ENCODE measurements at regions of chr10 and their contacts with region 1.

Region 1: DNA sequence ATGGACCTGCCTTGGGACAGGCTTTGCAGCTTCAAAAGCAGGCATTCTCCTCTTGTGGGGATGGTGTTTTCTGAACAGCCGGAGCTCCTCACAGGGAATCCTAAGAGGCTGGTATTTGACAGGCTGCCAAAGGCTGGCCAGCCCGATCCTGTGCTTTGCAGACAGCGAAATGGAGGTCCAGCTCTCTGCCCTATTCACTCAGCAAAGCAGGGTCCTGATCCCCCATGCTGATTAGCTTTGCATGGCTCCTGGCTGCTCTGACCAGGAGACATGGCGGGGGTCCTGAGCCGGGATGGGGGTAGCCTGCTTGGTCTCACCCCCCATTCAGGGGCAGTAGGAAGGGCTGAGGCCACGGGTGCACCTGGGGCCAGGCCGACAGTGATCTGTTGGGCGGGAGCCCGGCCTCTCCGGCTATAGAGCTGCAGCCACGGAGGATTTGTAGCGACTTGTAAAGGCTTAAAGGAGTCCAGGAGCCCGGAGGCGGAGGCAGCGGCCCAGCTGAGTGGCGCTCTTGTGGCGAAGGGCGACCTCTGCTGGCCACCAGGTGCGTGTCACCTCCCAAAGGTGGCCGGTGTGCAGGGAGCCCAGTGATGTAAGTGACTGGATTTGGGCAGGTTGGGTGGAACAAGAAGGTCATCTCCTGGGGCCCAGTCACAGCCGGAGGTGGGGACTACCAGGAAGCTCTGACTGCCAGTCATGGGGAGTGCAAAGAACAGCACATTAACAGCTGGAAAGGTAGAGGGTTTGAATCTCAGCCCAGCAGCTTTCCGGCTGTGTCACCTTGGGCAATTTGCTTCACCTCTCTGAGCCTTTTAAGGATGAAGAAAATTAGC is 126.5 kb downstream of the ZMIZ1 start:
- ATAC-seq: peak; percentile 18 to 90 (median 83)
- H3K4me3 ChIP-seq: no peak overlapping the region
- H3K27ac ChIP-seq: peak overlapping the region; percentile 74 to 76
- H3K4me1 ChIP-seq: peaks cover 23 to 37% of the 10 kb centered on the region in 2 donors

Region 2: DNA sequence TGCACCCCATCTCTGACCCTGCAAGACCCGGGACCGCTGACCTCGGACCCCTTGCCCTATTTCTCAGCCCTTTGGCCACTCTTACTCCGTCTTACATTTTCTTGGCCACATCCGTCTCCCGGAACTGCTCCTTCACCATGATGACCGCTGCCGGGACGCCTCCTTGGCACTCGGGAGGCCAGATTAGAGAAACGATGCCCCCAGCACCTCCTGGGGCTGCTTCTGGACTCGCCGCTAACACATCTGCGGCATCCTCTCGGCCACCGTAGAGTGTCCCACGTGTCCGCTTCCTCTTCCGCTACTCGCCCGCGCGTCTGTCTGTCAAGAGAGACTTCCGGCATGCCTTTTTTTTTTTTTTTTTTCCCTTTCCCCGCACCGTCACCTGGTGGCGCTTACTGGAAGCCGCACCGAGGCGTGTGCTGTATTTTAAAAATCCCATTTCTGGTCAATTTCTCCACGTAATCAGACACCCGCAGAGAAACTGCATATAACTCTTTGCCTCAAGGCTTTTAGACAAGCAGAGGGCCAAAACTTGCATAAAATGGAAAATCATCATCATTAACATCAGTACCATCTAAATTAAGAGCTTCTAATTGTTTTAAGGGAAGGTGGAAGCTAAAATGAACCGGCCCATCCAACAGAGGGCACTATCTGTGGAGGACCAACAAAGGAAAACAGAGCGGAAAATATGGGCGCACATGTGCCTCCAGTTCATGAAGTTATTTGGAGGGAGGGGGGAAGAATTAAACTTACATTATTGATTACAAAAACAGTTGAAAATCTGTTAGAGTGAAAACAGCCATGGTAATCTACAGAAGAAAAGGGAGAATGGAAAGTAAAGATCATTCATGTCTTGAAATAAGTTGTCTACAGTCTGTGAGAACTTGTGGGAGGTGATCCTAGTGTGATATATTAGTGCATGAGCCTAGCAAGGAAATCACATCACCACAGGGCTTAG is 1165.8 kb before region 1 on chr10 and contains the start of gene POLR3A:
- in situ Hi-C with region 1: loop called in 1 of 9 experiments (anchors 25 kb)
- ATAC-seq: peak; percentile 61 to 74 (median 68)
- H3K4me3 ChIP-seq: peak within 1 kb of the TSS; percentile 79 to 98 (median 85)
- H3K27ac ChIP-seq: peak within 1 kb of the TSS; percentile 59 to 92
- H3K4me1 ChIP-seq: peaks cover 6 to 7% of the 10 kb centered on the region in 2 donors
- total RNA-seq, gene POLR3A: 17.4 to 31.2 (median 24.1) TPM

Region 3: GRCh38 chr10:78047314-78047891 is 1147.9 kb before region 1 on chr10:
- in situ Hi-C with region 1: loop called in 5 of 9 experiments (anchors 10 to 25 kb)
- ATAC-seq: peak; percentile 32 to 94 (median 84)
- H3K4me3 ChIP-seq: no peak overlapping the region
- H3K27ac ChIP-seq: peak overlapping the region; percentile 24 to 75
- H3K4me1 ChIP-seq: peaks cover 10 to 12% of the 10 kb centered on the region in 2 donors

Region 4: DNA sequence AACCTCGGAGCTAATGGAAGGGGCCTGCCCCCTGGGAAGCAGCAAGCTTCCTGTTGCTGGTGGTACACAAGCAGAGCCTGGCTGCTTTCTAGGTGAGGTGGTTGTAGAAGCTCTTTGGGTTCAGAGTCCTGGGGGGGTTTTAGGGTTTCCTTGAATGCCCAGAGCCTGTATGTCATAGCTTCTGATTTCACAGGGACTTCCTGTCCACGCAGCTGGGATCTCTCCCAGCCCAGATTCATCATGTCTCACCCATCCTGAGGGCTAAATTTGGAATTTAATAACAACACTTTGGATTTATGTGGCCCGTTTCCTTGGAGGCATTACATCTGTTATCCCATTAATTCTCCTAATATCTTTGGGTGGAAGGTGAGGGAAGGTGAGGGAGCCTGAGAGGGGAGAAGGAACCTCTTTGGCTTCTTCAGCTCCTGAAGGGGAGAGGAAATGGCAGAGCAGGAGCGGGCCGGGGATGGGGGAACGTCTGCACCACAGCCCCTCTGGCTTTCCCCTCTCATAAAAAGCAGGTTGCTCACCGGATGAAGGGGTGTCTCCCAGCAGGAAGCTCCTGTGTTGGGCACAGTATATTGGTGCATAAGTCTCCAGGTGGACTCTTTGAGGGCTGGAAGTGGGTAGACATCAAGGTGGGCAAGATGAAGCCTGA is 1142.0 kb before region 1 on chr10:
- in situ Hi-C with region 1: loop called in 5 of 9 experiments (anchors 10 to 25 kb)
- ATAC-seq: no peak
- H3K4me3 ChIP-seq: no peak overlapping the region
- H3K27ac ChIP-seq: no peak overlapping the region
- H3K4me1 ChIP-seq: peaks cover under 1 to 2% of the 10 kb centered on the region in 2 donors

Region 5: GRCh38 chr10:78211561-78212051 is 983.7 kb before region 1 on chr10:
- in situ Hi-C with region 1: loop called in 1 of 9 experiments (anchors 25 kb)
- ATAC-seq: peak in 5 of 8 experiments; percentile 19 to 44 (median 33)
- H3K4me3 ChIP-seq: no peak overlapping the region
- H3K27ac ChIP-seq: no peak overlapping the region
- H3K4me1 ChIP-seq: peaks cover 21 to 54% of the 10 kb centered on the region in 2 donors

Region 6: GRCh38 chr10:79084012-79084971 is 111.0 kb before region 1 on chr10:
- in situ Hi-C with region 1: loop called in 3 of 9 experiments (anchors 25 kb)
- ATAC-seq: peak; percentile 32 to 67 (median 44)
- H3K4me3 ChIP-seq: no peak overlapping the region
- H3K27ac ChIP-seq: no peak overlapping the region
- H3K4me1 ChIP-seq: peaks cover 65 to 79% of the 10 kb centered on the region in 2 donors